ENCODE measurements at regions of chr12 and their contacts with region 1.

Region 1: GRCh38 chr12:54005853-54006686 is 2.7 kb upstream of the HOXC8 start:
- DNase-seq: peak; percentile 69 to 87 (median 79)
- H3K4me3 ChIP-seq: peak overlapping the region in 28 of 59 donors; percentile 2 to 51 (median 30)
- H3K27ac ChIP-seq: no peak overlapping the region
- H3K27me3 ChIP-seq: peaks cover 14 to 98% (median 95%) of the 10 kb centered on the region in 45 donors
- CTCF ChIP-seq: peak; percentile 74 to 97 (median 93)

Region 2: GRCh38 chr12:54191550-54192022 is 185.5 kb after region 1 on chr12:
- intact Hi-C with region 1: loop called (anchors 1 to 2 kb)
- DNase-seq: peak; percentile 58 to 86 (median 80)
- H3K4me3 ChIP-seq: peak overlapping the region in 1 of 59 donors; percentile 7
- H3K27ac ChIP-seq: no peak overlapping the region
- H3K27me3 ChIP-seq: peaks cover 0 to 62% (median 16%) of the 10 kb centered on the region in 45 donors
- CTCF ChIP-seq: peak; percentile 65 to 93 (median 84)

Region 3: DNA sequence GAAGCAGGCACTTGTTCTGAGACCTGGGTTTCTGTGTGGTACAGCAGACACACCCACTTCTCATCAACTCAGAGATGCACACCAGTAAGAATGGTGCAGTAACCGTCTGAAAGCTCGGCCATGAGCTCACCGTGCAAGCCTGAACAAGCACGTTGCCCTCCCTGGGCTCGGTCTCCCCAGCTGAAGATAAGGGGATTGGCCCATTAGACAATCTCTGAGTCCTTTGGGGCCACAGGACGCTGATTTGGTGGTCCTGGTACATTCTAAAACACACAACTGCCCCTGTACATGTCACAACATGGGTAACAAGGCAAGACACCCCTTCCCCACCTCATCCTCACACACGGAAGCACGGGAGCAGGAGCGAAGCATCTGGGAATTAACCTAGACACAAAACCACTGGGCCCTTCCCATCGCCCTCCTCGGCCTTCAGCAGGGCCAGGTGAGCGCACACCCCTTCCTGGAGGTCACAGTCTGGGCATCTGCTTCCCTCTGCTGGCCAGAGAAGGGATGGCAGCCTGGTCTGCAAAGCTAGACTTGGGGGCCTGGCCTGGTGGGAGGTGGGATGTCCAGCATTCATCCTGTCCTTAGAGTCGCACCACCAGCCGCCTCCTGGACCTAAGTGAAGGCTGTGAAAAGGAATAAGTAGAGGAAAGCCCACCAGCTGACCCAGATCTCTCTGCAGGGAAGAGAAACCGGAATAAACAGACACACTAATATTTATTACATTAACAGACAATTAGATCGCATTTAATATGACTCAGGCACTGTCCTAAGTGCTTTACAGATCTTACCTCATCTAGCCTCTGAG is 201.6 kb after region 1 on chr12:
- intact Hi-C with region 1: loop called (anchors 2 to 5 kb)
- DNase-seq: peak in 9 of 10 donors; percentile 42 to 62 (median 57)
- H3K4me3 ChIP-seq: no peak overlapping the region
- H3K27ac ChIP-seq: no peak overlapping the region
- H3K27me3 ChIP-seq: peaks cover 0 to 25% (median 0%) of the 10 kb centered on the region in 45 donors
- CTCF ChIP-seq: peak; percentile 41 to 91 (median 82)

Region 4: GRCh38 chr12:54214553-54215406 is 208.7 kb after region 1 on chr12:
- intact Hi-C with region 1: loop called (anchors 2 to 5 kb)
- DNase-seq: peak; percentile 67 to 90 (median 83)
- H3K4me3 ChIP-seq: peak overlapping the region in 48 of 59 donors; percentile 5 to 57 (median 40)
- H3K27ac ChIP-seq: peak overlapping the region in 3 of 59 donors; percentile 10 to 68 (median 27)
- H3K27me3 ChIP-seq: peaks cover 0 to 20% (median 0%) of the 10 kb centered on the region in 45 donors
- CTCF ChIP-seq: peak; percentile 66 to 100 (median 99)

Region 5: GRCh38 chr12:54379401-54380201 is 373.5 kb after region 1 on chr12:
- intact Hi-C with region 1: loop called (anchors 10 kb)
- DNase-seq: peak; percentile 78 to 93 (median 89)
- H3K4me3 ChIP-seq: peak overlapping the region; percentile 32 to 73 (median 58)
- H3K27ac ChIP-seq: peak overlapping the region in 54 of 59 donors; percentile 2 to 85 (median 66)
- H3K27me3 ChIP-seq: no peaks in the 10 kb centered on the region
- CTCF ChIP-seq: peak; percentile 89 to 100 (median 100)